Astrocyte of the cerebellum (primary cell): ENCODE measurements at regions of chr1 and their contacts with region 1.

Region 1: GRCh38 chr1:17606826-17607440 is 67.4 kb downstream of the ARHGEF10L start:
- DNase-seq: peak; percentile 22
- H3K4me3 ChIP-seq: no peak overlapping the region
- CTCF ChIP-seq: peak; percentile 97

Region 2: GRCh38 chr1:17498214-17498613 is 108.7 kb before region 1 on chr1:
- in situ Hi-C with region 1: loop called (anchors 5 kb)
- DNase-seq: no peak
- H3K4me3 ChIP-seq: no peak overlapping the region
- CTCF ChIP-seq: no peak

Region 3: DNA sequence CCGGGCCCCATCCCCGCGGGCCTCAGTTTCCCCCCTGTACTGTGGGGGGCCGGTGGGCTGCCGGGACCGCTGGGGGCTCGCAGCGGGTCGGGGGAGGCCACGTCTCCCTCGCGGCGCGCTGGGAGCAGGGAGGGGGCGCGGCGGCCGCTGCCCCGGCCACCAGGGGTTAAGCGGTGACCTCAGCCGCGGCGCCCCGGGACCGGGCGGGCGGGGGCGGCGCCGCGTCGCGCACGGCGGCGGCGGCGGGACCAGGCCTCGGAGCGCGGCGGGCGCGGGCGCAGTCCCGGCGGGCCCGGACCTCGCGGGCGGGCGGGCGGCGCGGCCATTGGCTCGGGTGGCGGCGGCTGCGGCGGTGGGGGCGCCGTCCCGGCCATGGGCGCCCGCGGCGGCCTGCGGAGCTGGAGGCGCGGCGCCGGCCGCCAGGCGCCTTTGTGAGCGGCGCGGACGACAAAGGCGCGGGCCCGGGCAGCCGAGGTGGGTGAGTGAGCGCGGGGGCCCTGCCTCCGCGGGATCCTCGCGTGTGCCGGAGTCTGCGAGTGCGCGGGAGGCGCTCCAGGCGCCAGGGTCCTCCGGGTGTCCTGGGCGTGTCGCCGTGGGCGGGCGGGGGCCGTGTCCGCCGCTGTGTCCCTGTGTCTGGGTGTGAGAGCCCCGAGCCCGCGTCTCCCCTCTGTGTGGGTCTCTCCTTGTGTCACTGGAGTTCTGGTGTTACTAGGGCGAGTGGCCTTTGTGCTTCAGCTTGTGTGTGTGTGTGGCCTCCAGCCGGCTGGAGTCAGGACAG is 67.3 kb before region 1 on chr1 and contains the start of gene ARHGEF10L:
- in situ Hi-C with region 1: loop called (anchors 5 kb)
- DNase-seq: no peak
- H3K4me3 ChIP-seq: peak within 1 kb of the TSS; percentile 59
- CTCF ChIP-seq: no peak

Region 4: DNA sequence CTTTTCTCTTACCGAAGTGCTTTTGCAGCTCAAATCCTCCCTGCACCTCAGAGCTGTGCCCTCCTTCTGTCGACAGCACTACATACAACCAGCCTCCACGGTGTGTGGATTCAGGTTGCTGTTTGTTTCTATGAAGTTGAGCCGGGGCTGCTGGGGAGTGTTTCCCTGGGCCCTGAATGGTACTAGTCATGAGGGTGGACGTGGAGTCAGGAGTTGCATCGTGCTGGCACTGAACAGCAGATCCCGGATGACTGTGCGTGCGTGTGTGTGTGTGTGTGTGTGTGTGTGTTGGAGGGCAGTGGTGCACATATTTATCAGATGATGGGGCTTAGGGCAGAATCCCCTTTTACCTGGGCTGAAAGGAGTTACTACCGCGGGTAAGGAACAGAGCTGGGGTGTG is 195.2 kb after region 1 on chr1:
- in situ Hi-C with region 1: no loop called
- DNase-seq: no peak
- H3K4me3 ChIP-seq: no peak overlapping the region
- CTCF ChIP-seq: no peak